Gastrocnemius medialis (tissue), 4 donors: ENCODE measurements at regions of chr15 and their contacts with region 1.

Region 1: GRCh38 chr15:56491110-56491722 is 26.3 kb upstream of the MNS1 start:
- DNase-seq: peak; percentile 23 to 24
- ATAC-seq: no peak
- H3K4me3 ChIP-seq: no peak overlapping the region
- H3K27ac ChIP-seq: no peak overlapping the region
- H3K4me1 ChIP-seq: no peaks in the 10 kb centered on the region
- H3K27me3 ChIP-seq: no peaks in the 10 kb centered on the region
- CTCF ChIP-seq: peak in 4 of 5 experiments; percentile 27 to 75 (median 58)
- POLR2A ChIP-seq: no peak

Region 2: GRCh38 chr15:55858661-55859060 is 632.6 kb before region 1 on chr15:
- in situ Hi-C with region 1: no loop called
- intact Hi-C with region 1: no loop called
- DNase-seq: no peak
- ATAC-seq: no peak
- H3K4me3 ChIP-seq: no peak overlapping the region
- H3K27ac ChIP-seq: peak overlapping the region in 1 of 4 donors; percentile 10
- H3K4me1 ChIP-seq: no peaks in the 10 kb centered on the region
- H3K27me3 ChIP-seq: no peaks in the 10 kb centered on the region
- CTCF ChIP-seq: no peak
- POLR2A ChIP-seq: no peak

Region 3: DNA sequence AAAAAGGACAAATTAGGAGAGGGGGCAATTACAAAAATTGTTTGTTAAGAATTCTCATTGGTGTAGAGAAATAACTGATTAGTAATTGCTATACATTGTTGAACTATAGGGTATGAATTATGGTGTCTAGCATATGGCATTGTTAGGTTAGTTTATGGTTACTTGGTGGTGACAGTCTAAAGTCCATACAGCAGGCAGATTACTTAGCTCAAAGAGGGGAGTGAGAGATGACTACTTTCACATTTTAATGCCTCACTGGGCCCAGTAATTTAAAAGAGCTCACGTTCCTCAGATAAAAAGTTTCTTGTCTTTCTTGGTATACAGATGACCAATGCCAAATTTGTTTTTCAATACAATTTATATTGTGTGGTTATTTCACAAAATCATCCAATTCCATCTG is 385.4 kb before region 1 on chr15:
- in situ Hi-C with region 1: no loop called
- intact Hi-C with region 1: no loop called
- DNase-seq: no peak
- ATAC-seq: no peak
- H3K4me3 ChIP-seq: no peak overlapping the region
- H3K27ac ChIP-seq: peak overlapping the region in 2 of 4 donors; percentile 90 to 92
- H3K4me1 ChIP-seq: peaks cover 44 to 57% of the 10 kb centered on the region in 2 donors
- H3K27me3 ChIP-seq: no peaks in the 10 kb centered on the region
- CTCF ChIP-seq: no peak
- POLR2A ChIP-seq: no peak

Region 4: DNA sequence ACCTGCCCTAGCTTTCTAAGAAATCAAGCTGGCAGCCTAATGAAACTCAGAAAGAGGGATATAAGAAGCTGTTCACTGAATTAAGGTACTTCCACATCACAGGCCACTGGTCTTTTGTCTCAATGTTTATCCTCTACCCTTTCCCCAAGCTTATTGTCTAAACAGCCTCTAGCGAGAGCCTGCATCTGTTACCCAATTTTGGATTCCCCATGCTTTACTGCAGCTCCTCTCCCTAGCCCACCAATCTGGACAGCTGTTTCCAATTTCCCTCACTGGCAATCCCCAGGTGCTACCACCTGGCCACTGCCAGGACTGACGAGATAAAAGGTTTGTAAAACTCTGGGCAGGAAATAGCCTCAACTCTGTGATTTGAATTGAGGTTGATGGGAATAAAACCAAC is 184.1 kb before region 1 on chr15:
- in situ Hi-C with region 1: no loop called
- intact Hi-C with region 1: no loop called
- DNase-seq: no peak
- ATAC-seq: no peak
- H3K4me3 ChIP-seq: no peak overlapping the region
- H3K27ac ChIP-seq: no peak overlapping the region
- H3K4me1 ChIP-seq: no peaks in the 10 kb centered on the region
- H3K27me3 ChIP-seq: no peaks in the 10 kb centered on the region
- CTCF ChIP-seq: no peak
- POLR2A ChIP-seq: no peak

Region 5: DNA sequence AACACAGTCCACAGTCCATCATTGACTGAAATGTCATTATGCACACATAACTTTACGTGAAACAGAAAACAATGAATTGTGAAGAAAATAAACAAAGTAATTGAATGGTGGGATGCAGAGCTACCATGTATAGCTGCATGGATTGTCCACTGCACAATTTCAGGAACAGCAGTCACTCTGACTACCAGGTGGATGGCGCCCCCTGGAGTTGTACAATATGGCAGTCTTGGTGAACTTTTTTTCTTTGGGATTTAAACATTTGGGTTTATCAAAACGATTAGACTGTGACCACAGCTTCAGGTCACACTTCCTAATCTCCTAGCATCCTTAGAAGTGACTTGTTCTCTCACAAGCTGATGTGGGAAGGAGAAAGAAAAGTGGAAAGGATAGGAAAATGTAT is 378.4 kb after region 1 on chr15:
- in situ Hi-C with region 1: loop called in 2 of 4 experiments (anchors 5 to 10 kb)
- intact Hi-C with region 1: loop called (anchors 1 kb)
- DNase-seq: peak in 1 of 2 donors; percentile 35
- ATAC-seq: peak; percentile 46 to 58
- H3K4me3 ChIP-seq: no peak overlapping the region
- H3K27ac ChIP-seq: no peak overlapping the region
- H3K4me1 ChIP-seq: peaks cover 0 to 8% of the 10 kb centered on the region in 2 donors
- H3K27me3 ChIP-seq: no peaks in the 10 kb centered on the region
- CTCF ChIP-seq: peak; percentile 58 to 79 (median 70)
- POLR2A ChIP-seq: no peak

Region 6: GRCh38 chr15:57213862-57214261 is 722.6 kb after region 1 on chr15:
- in situ Hi-C with region 1: no loop called
- intact Hi-C with region 1: loop called (anchors 10 kb)
- DNase-seq: no peak
- ATAC-seq: peak; percentile 66 to 75
- H3K4me3 ChIP-seq: no peak overlapping the region
- H3K27ac ChIP-seq: peak overlapping the region in 3 of 4 donors; percentile 8 to 45 (median 14)
- H3K4me1 ChIP-seq: peaks cover 62 to 72% of the 10 kb centered on the region in 2 donors
- H3K27me3 ChIP-seq: no peaks in the 10 kb centered on the region
- CTCF ChIP-seq: peak; percentile 20 to 64 (median 34)
- POLR2A ChIP-seq: no peak